Colonic mucosa (tissue), 4 donors: ENCODE measurements at regions of chr4 and their contacts with region 1.

Region 1: DNA sequence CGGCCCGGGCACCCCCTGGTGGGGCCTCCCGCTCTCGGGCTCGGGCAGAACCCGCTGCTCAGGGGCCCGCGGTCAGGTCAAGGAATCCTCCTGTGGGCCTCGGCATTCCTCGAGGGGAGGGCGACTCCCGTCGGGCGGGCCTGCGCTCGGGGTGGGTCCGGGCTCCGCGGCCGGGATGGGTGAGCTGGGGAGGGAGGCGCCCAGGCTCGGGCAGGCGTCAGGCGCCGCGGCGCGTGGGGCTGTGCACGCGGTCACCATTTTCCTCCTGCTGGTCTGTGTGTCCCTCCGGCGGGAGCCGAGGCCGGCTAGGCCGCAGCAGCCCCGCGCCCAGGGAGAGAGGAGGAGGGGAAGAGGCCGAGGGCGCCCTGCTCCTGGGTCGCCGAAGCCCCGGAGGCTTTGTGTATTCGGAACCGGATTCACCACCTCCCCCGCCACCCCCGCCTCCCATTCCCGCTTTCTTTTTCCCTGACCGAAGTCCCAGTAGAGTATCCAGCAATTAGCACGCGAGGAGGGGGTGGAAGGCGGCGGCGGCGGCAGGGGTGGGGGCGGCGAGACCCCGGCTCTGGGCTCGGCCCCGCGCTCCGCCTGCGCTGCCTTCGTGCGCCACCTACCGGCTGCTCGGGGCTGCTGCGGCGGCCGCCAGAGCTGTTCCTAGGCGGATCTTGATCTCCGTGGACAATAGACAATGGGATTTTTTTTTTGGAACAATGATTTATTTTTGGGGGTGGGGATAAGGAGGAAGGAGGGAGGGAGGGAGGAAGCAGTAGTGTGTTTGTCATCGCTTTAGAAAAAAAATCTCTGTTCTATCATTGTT is 99.0 kb upstream of the MAML3 start:
- DNase-seq: peak; percentile 81
- H3K4me3 ChIP-seq: peak overlapping the region; percentile 62
- H3K27ac ChIP-seq: peak overlapping the region; percentile 79
- H3K4me1 ChIP-seq: no peaks in the 10 kb centered on the region
- H3K27me3 ChIP-seq: no peaks in the 10 kb centered on the region
- CTCF ChIP-seq: peak; percentile 94

Region 2: GRCh38 chr4:139651282-139652194 is 601.4 kb before region 1 on chr4:
- intact Hi-C with region 1: loop called (anchors 10 kb)
- DNase-seq: peak; percentile 73
- H3K4me3 ChIP-seq: no peak overlapping the region
- H3K27ac ChIP-seq: no peak overlapping the region
- H3K4me1 ChIP-seq: no peaks in the 10 kb centered on the region
- H3K27me3 ChIP-seq: no peaks in the 10 kb centered on the region
- CTCF ChIP-seq: peak; percentile 91

Region 3: GRCh38 chr4:139734875-139735380 is 518.0 kb before region 1 on chr4:
- intact Hi-C with region 1: loop called (anchors 10 kb)
- DNase-seq: peak; percentile 71
- H3K4me3 ChIP-seq: peak overlapping the region; percentile 33
- H3K27ac ChIP-seq: no peak overlapping the region
- H3K4me1 ChIP-seq: no peaks in the 10 kb centered on the region
- H3K27me3 ChIP-seq: no peaks in the 10 kb centered on the region
- CTCF ChIP-seq: peak; percentile 57

Region 4: DNA sequence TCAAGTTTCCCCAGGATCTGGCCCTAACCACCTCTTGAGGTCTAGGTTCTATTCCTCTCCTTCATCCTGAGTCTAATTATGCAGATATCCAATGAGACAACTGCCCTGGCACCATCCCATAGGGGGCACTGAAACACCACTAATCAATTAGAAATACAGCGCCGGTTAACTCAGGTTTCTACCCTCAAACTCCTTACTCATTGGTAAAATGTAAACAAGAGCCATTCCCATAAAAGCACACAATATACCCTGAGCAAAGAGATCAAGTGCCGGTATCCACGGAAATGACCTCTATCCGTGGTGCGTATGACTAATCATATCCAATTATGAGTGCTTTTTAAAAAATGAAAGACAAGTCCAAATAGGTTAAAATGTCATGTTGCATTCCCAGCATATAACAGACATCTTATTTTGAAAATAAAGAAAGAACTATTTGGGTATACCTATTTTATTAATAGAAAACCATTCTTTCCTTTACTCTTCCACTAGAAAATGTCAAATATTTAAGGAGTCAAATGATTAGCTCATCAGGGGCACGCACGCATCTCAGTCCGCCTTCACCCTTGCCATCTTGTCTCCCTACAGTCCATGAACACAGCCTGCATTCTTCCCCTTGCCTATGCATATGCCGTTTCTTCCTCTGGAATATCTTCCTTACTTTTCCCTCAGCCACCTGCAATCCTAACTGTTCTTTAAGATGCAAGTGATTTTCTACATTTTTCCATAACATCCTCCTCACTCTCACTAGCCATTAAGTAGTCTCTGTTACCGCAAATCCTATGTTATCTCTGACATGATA is 240.1 kb before region 1 on chr4:
- intact Hi-C with region 1: loop called (anchors 5 kb)
- DNase-seq: peak; percentile 87
- H3K4me3 ChIP-seq: no peak overlapping the region
- H3K27ac ChIP-seq: no peak overlapping the region
- H3K4me1 ChIP-seq: no peaks in the 10 kb centered on the region
- H3K27me3 ChIP-seq: no peaks in the 10 kb centered on the region
- CTCF ChIP-seq: peak; percentile 54

Region 5: DNA sequence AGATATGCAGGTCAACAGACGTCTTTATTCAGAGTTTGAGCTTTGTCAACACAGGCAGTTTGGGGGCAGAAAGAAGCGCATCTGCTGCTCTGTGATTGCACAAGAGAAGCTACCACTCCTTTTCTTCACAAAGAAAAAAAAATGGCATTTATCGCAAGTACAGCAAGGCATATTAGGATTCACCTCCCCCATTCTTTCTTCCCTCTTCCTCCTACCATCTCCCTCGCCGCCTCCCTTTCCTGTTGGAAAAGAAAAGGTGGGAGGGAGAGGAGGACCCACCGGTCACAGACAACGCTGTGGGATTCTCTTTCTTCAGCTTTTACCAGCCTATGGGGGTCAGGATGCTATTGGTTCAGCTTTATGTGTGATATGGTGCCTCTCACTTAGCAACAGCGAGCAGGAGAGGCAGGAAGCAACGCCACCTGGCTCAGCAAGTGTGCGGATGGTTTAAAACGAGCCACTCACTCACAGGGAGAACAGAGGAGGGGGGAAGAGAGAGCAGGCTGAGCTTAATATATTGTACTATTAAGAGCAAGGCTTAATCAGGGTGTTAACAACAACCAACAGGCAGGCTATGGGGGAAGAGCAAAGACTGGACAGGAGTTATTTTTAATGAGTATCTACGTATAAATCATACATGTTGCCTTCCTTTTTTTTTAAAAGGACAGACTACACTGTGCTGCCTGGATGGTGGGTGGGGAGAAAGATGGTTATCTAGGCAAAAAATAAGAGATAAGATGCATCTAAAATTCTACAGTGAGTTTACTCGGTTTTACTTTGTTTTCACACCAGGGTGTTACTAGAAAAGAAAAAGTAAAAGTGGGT is 203.7 kb before region 1 on chr4:
- intact Hi-C with region 1: loop called (anchors 5 kb)
- DNase-seq: peak; percentile 73
- H3K4me3 ChIP-seq: peak overlapping the region; percentile 31
- H3K27ac ChIP-seq: peak overlapping the region; percentile 84
- H3K4me1 ChIP-seq: peaks cover 13% of the 10 kb centered on the region
- H3K27me3 ChIP-seq: no peaks in the 10 kb centered on the region
- CTCF ChIP-seq: no peak

Region 6: DNA sequence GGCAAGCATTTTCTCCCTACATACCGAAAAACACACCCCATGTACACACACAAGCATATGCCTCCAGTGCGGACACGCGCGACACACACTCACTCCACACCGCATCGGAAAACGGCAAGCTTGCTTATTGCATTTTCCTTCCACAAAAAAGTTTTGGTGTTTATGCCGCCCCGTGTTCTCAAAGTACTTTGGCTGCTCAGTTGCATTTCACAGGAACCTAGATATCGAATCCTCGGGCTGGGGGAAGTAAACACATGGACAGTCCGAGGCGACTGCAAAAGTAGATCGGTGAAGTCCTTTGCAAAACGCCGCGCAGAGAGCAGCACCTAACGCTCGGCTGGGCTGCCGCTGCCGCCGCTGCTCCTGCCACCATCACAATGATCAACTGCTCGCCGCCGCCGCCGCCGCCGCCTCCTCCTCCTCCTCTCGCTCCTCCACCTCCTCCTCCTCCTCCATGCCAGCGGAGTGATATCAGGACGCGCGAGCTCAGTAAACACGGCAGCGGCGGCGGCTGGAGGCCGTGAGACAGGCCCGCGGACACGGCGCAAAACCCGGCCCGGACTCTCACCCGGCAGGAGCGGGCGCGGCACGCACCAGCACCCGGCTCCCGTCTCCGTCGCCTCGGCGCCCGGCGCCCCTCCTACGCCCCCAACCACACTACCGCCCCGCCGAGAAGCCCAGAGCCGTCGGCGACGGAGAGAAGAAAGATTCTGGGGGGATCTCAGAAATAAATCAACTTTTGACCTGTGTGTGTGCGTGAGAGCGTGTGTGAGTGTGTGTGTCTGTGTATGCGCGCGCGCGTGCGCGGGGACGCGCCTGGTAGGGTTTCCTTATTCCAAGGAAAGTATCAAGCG is 99.0 kb before region 1 on chr4 and contains the start of gene MAML3:
- intact Hi-C with region 1: loop called (anchors 5 kb)
- DNase-seq: peak; percentile 95
- H3K4me3 ChIP-seq: peak within 1 kb of the TSS; percentile 79
- H3K27ac ChIP-seq: peak within 1 kb of the TSS; percentile 99
- H3K4me1 ChIP-seq: no peaks in the 10 kb centered on the region
- H3K27me3 ChIP-seq: no peaks in the 10 kb centered on the region
- CTCF ChIP-seq: no peak
- total RNA-seq, gene MAML3: 9.3 to 10.1 TPM

Region 7: GRCh38 chr4:140326395-140326993 is 73.5 kb after region 1 on chr4:
- intact Hi-C with region 1: loop called (anchors 5 kb)
- DNase-seq: peak; percentile 41
- H3K4me3 ChIP-seq: no peak overlapping the region
- H3K27ac ChIP-seq: no peak overlapping the region
- H3K4me1 ChIP-seq: no peaks in the 10 kb centered on the region
- H3K27me3 ChIP-seq: peaks cover 4% of the 10 kb centered on the region
- CTCF ChIP-seq: peak; percentile 42

Region 8: GRCh38 chr4:140373328-140374129 is 120.6 kb after region 1 on chr4 and contains the start of gene SCOC:
- intact Hi-C with region 1: no loop called
- DNase-seq: peak; percentile 100
- H3K4me3 ChIP-seq: peak within 1 kb of the TSS; percentile 92
- H3K27ac ChIP-seq: peak within 1 kb of the TSS; percentile 93
- H3K4me1 ChIP-seq: peaks cover 4% of the 10 kb centered on the region
- H3K27me3 ChIP-seq: no peaks in the 10 kb centered on the region
- CTCF ChIP-seq: no peak
- total RNA-seq, gene SCOC: 58.5 to 65.0 TPM